Stomach (tissue), 19 donors: ENCODE measurements at regions of chr16 and their contacts with region 1.

Region 1: GRCh38 chr16:50354629-50355456 is 13.9 kb downstream of the BRD7 start:
- DNase-seq: no peak
- H3K4me3 ChIP-seq: no peak overlapping the region
- H3K27ac ChIP-seq: no peak overlapping the region
- H3K4me1 ChIP-seq: peaks cover under 1 to 33% (median 14%) of the 10 kb centered on the region in 4 donors
- H3K27me3 ChIP-seq: no peaks in the 10 kb centered on the region
- CTCF ChIP-seq: peak in 4 of 7 experiments; percentile 38 to 62 (median 48)
- EP300 ChIP-seq: no peak
- POLR2A ChIP-seq: no peak

Region 2: DNA sequence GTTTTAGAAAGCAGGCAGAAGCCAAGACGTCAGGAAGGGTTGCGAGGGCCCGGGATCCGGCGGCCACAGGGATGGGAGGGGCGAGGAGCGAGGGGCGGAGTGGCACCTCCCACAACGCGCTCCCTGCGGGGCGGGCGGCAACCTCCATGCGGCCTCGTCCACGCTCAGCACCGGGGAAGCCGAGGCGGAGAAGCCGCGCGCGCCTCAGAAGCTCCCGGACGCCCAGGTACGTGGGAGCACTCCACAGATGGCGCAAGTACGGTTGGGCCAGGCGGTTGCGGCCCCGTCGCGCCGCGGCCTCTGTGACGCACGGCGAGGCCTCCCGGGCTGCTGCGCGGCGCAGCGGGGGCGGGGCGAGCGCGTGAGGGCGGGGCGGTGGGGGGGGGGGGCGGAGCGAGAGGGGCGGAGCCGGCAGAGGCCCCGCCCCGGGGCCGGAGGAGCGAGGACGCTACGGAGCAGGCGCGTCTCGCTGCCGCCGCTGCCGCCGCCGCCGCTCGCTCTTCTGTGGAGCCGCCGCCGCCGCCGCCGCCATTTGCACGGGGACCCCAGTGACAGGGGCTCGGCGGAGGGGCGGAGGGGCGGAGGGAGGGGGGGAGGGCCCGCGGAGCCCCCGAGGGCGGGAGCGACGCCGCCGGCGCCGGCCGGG is 201.9 kb before region 1 on chr16 and contains the start of gene TENT4B:
- intact Hi-C with region 1: no loop called
- DNase-seq: peak; percentile 87 to 96
- H3K4me3 ChIP-seq: peak within 1 kb of the TSS; percentile 70 to 99 (median 80)
- H3K27ac ChIP-seq: peak within 1 kb of the TSS; percentile 92 to 100 (median 95)
- H3K4me1 ChIP-seq: peaks cover 17 to 46% (median 27%) of the 10 kb centered on the region in 4 donors
- H3K27me3 ChIP-seq: no peaks in the 10 kb centered on the region
- CTCF ChIP-seq: no peak
- EP300 ChIP-seq: no peak
- POLR2A ChIP-seq: no peak
- total RNA-seq, gene TENT4B: 4.1 to 24.1 (median 14.9) TPM

Region 3: DNA sequence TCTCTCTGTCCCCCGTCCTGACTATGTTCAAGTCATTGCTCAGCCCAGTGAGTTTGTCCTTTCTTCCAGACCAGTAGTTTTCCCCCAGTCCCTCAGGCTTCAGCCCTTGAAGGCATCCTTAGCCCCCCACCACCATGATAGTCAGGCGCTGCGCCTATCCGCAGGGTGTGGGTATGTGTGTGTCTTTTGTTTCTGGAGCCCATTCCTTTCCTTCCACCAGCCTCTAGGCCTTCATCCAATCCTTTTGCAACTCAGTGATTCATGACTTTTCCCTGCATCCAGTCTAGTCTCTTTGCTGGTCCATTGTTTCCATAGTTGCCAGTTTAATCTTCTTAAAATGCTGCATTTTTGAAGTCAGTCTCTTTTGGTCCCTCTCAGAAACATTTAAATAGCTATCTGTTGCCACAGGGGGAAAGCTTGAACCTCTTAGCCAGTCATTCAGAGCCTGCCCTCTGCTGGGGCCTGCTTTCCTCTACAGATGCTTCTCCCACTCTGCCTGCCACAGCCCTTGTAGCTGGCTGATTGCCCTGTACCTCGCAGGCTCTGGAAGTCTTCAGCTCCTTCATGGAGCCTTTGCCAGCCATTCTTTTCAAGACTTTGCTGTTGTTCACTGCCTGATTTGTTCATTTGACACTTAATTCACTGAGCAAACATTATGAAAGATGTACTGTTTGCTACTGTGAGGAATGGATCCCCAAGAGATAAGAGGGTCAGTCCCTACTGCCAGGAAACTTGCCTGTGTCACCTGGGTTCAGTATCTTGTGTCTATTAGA is 144.4 kb before region 1 on chr16:
- intact Hi-C with region 1: loop called (anchors 10 kb)
- DNase-seq: peak; percentile 81 to 94
- H3K4me3 ChIP-seq: no peak overlapping the region
- H3K27ac ChIP-seq: peak overlapping the region in 4 of 5 donors; percentile 11 to 31 (median 27)
- H3K4me1 ChIP-seq: peaks cover 20 to 61% (median 38%) of the 10 kb centered on the region in 4 donors
- H3K27me3 ChIP-seq: no peaks in the 10 kb centered on the region
- CTCF ChIP-seq: peak in 5 of 7 experiments; percentile 46 to 68 (median 56)
- EP300 ChIP-seq: no peak
- POLR2A ChIP-seq: no peak

Region 4: GRCh38 chr16:50259334-50260205 is 95.3 kb before region 1 on chr16:
- intact Hi-C with region 1: no loop called
- DNase-seq: peak in 1 of 2 donors; percentile 26
- H3K4me3 ChIP-seq: no peak overlapping the region
- H3K27ac ChIP-seq: peak overlapping the region in 2 of 5 donors; percentile 30 to 36
- H3K4me1 ChIP-seq: peaks cover 14 to 45% (median 22%) of the 10 kb centered on the region in 4 donors
- H3K27me3 ChIP-seq: no peaks in the 10 kb centered on the region
- CTCF ChIP-seq: no peak
- EP300 ChIP-seq: no peak
- POLR2A ChIP-seq: no peak